SK-N-SH (cell line): ENCODE measurements at regions of chr17 and their contacts with region 1.

Region 1: DNA sequence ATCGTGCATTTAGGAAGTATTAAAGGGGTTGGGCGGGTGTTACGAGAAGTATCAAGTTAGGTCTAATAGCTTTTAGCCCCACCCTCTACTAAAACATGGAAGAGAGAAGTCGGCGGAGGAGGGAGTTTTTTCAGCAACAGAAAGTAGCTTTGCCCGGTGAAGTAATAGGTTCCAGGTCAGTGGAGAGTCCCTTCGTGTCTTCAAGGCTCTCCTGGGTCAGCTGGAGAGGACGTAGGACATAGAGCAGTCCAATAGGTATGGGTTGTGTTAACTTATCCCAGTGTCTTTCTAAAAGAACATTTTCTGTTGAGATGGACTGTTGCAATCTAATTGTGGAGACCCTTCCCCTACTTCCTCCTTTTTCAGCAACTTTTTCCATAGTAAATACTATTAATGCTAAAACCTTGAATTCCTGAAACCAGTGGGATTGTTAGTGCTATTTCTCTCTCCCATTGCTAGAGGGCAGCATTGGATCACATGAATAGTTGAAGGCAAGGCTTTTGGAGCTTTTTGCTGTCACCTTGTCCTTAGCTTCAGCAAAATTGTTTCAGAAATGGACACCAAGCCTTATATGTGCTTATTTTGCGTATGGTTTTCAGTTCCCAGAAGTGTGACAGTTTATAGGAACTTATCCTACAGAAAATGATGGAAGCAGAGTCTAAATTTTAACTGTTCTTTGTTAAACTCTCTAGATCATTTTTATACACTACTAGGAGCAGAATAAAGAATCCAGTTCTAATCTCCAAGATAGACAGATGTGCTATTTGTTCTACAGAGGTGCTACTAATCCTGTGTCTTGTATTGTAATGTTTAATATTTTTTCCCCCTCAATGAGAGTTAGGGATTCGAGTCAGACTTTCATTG is 38.4 kb downstream of the UTP18 start:
- DNase-seq: peak; percentile 65
- H3K4me3 ChIP-seq: no peak overlapping the region; a peak in 1 of 4 replicates
- H3K27ac ChIP-seq: no peak overlapping the region; a peak in 1 of 4 replicates
- H3K4me1 ChIP-seq: no peaks in the 10 kb centered on the region
- H3K27me3 ChIP-seq: no peaks in the 10 kb centered on the region
- CTCF ChIP-seq: peak; percentile 91
- EP300 ChIP-seq: no peak
- RAD21 ChIP-seq: peak; percentile 98

Region 2: DNA sequence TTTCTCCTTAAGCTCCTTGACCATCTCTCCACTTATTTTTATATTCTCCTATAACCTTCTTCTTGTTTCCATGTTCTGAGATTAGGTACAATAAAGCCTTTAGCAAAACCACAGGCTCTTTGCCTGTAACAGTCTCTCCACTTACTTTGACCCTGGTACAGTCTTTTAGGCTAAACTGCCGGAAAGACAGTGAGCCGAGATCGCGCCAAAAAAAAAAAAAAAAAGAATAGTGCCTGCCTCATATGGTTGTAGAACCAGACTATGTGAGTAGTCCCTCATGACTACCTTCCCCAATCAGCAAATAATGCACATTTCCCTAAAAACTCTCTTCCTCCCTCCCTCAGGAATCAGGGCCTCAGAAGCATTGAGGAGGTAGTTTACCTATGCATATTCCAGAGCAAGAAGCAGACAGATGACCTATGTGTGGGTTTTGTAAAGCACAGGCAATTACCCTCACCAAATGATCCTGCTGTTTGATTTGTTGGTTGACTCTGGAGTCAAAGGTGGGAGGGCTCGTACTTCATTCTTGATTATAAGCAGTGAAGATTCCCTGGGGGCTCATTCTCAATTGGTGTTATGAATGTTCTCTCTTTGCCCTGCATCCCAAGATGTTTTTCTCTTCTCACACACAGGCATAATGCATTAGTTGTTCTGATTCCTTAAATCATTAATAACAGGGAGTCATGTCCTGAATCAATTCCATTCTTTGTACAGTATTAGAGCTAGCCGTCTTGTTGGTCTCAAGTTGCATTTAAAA is 154.3 kb before region 1 on chr17:
- CTCF ChIA-PET with region 1: no interaction called
- POLR2A ChIA-PET with region 1: no interaction called
- DNase-seq: no peak
- H3K4me3 ChIP-seq: no peak overlapping the region
- H3K27ac ChIP-seq: no peak overlapping the region
- H3K4me1 ChIP-seq: no peaks in the 10 kb centered on the region; a peak in 1 of 4 replicates
- H3K27me3 ChIP-seq: no peaks in the 10 kb centered on the region
- CTCF ChIP-seq: no peak
- EP300 ChIP-seq: no peak
- RAD21 ChIP-seq: no peak

Region 3: GRCh38 chr17:51275381-51275780 is 23.4 kb before region 1 on chr17:
- CTCF ChIA-PET with region 1: interaction called, 29 read pairs
- POLR2A ChIA-PET with region 1: no interaction called
- DNase-seq: no peak
- H3K4me3 ChIP-seq: peak overlapping the region in 1 of 2 experiments; percentile 7; a peak in 1 of 4 replicates
- H3K27ac ChIP-seq: peak overlapping the region in 1 of 2 experiments; percentile 63; a peak in 2 of 4 replicates
- H3K4me1 ChIP-seq: peaks cover 0 to 12% of the 10 kb centered on the region in 2 experiments; a peak in 1 of 4 replicates
- H3K27me3 ChIP-seq: no peaks in the 10 kb centered on the region
- CTCF ChIP-seq: no peak
- EP300 ChIP-seq: peak in 1 of 2 experiments; percentile 64; a peak in 1 of 4 replicates
- RAD21 ChIP-seq: no peak

Region 4: GRCh38 chr17:51335883-51336822 is 37.4 kb after region 1 on chr17:
- CTCF ChIA-PET with region 1: interaction called, 19 read pairs
- POLR2A ChIA-PET with region 1: no interaction called
- DNase-seq: no peak
- H3K4me3 ChIP-seq: no peak overlapping the region
- H3K27ac ChIP-seq: no peak overlapping the region
- H3K4me1 ChIP-seq: peaks cover 0 to 5% of the 10 kb centered on the region in 2 experiments; a peak in 1 of 4 replicates
- H3K27me3 ChIP-seq: peaks cover 7% of the 10 kb centered on the region; the same call in 1 of the 2 replicates
- CTCF ChIP-seq: no peak
- EP300 ChIP-seq: no peak
- RAD21 ChIP-seq: no peak

Region 5: GRCh38 chr17:51362818-51363585 is 64.3 kb after region 1 on chr17:
- CTCF ChIA-PET with region 1: interaction called, 35 read pairs
- POLR2A ChIA-PET with region 1: no interaction called
- DNase-seq: no peak
- H3K4me3 ChIP-seq: no peak overlapping the region
- H3K27ac ChIP-seq: no peak overlapping the region
- H3K4me1 ChIP-seq: peaks cover 0 to 13% of the 10 kb centered on the region in 2 experiments; a peak in 1 of 4 replicates
- H3K27me3 ChIP-seq: no peaks in the 10 kb centered on the region
- CTCF ChIP-seq: no peak
- EP300 ChIP-seq: no peak
- RAD21 ChIP-seq: no peak

Region 6: GRCh38 chr17:51419476-51419875 is 120.7 kb after region 1 on chr17:
- CTCF ChIA-PET with region 1: no interaction called
- POLR2A ChIA-PET with region 1: no interaction called
- DNase-seq: no peak
- H3K4me3 ChIP-seq: no peak overlapping the region
- H3K27ac ChIP-seq: no peak overlapping the region
- H3K4me1 ChIP-seq: no peaks in the 10 kb centered on the region
- H3K27me3 ChIP-seq: no peaks in the 10 kb centered on the region
- CTCF ChIP-seq: no peak
- EP300 ChIP-seq: no peak
- RAD21 ChIP-seq: no peak

Region 7: GRCh38 chr17:51435641-51436091 is 136.9 kb after region 1 on chr17:
- CTCF ChIA-PET with region 1: interaction called, 12 read pairs
- POLR2A ChIA-PET with region 1: no interaction called
- DNase-seq: peak; percentile 66
- H3K4me3 ChIP-seq: no peak overlapping the region
- H3K27ac ChIP-seq: no peak overlapping the region
- H3K4me1 ChIP-seq: peaks cover 0 to 4% of the 10 kb centered on the region in 2 experiments; a peak in 1 of 4 replicates
- H3K27me3 ChIP-seq: no peaks in the 10 kb centered on the region
- CTCF ChIP-seq: peak; percentile 42
- EP300 ChIP-seq: no peak
- RAD21 ChIP-seq: peak; percentile 63

Region 8: GRCh38 chr17:51533219-51533618 is 234.5 kb after region 1 on chr17:
- CTCF ChIA-PET with region 1: interaction called, 50 read pairs
- POLR2A ChIA-PET with region 1: no interaction called
- DNase-seq: no peak
- H3K4me3 ChIP-seq: no peak overlapping the region
- H3K27ac ChIP-seq: no peak overlapping the region
- H3K4me1 ChIP-seq: peaks cover 0 to under 1% of the 10 kb centered on the region in 2 experiments; a peak in 2 of 4 replicates
- H3K27me3 ChIP-seq: no peaks in the 10 kb centered on the region
- CTCF ChIP-seq: no peak
- EP300 ChIP-seq: no peak
- RAD21 ChIP-seq: no peak